Activated CD4-positive, alpha-beta memory T cell treated with anti-CD3 and anti-CD28 coated beads, Interleukin-2, amount 10 ng/mL, durations not matched to agents 7 days and 5 days (primary cell): ENCODE measurements at regions of chr4 and their contacts with region 1.

Region 1: GRCh38 chr4:129362674-129363274 is 266.8 kb downstream of the C4orf33 start:
- DNase-seq: peak; percentile 48
- H3K4me3 Mint-ChIP-seq: no peak overlapping the region
- H3K27ac Mint-ChIP-seq: no peak overlapping the region
- H3K4me1 Mint-ChIP-seq: no peaks in the 10 kb centered on the region
- H3K27me3 Mint-ChIP-seq: peaks cover 9% of the 10 kb centered on the region

Region 2: DNA sequence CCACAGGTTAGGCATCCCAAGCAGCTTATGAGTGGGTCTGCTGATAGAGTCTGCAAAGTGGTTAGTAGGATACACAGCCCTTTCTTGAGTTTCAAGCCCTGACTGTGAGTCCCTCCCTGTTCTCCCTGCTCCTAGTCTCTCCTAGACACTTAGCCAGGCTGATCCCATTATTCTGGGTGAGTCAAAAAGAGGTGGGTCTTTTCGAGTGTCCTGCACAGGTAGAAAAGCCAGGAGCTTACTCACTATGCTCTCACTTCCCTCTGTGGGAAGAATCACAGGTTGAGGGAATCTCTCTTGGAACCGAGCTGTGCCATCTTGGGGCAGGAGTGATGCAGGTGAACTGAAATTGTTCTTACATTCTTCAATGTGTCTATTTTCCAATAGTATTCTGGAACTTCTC is 299.1 kb before region 1 on chr4:
- CTCF ChIA-PET with region 1: no interaction called
- POLR2A ChIA-PET with region 1: no interaction called
- DNase-seq: no peak
- H3K4me3 Mint-ChIP-seq: no peak overlapping the region
- H3K27ac Mint-ChIP-seq: no peak overlapping the region
- H3K4me1 Mint-ChIP-seq: no peaks in the 10 kb centered on the region
- H3K27me3 Mint-ChIP-seq: no peaks in the 10 kb centered on the region

Region 3: GRCh38 chr4:129377131-129377845 is 14.5 kb after region 1 on chr4:
- CTCF ChIA-PET with region 1: interaction called, 12 read pairs
- POLR2A ChIA-PET with region 1: interaction called, 3 read pairs
- DNase-seq: no peak
- H3K4me3 Mint-ChIP-seq: no peak overlapping the region
- H3K27ac Mint-ChIP-seq: no peak overlapping the region
- H3K4me1 Mint-ChIP-seq: no peaks in the 10 kb centered on the region
- H3K27me3 Mint-ChIP-seq: no peaks in the 10 kb centered on the region

Region 4: DNA sequence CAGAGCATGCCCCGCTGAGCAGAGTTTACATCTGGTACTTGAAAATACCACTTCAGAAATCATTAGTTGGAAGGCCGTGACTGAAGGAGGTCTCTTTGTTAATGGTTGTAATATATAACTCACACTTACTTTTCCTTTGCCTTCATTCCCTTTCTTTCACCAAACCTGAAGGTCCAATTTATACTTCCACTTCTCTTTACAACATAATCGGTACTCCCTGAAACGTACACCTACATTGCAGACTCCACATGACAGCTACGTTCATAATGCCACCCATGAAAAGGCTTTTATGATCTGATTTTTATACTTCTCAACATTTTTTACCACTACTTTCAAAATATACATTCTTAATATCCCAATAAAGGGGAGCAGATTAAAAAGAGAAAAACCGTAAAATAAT is 31.9 kb after region 1 on chr4:
- CTCF ChIA-PET with region 1: no interaction called
- POLR2A ChIA-PET with region 1: no interaction called
- DNase-seq: no peak
- H3K4me3 Mint-ChIP-seq: no peak overlapping the region
- H3K27ac Mint-ChIP-seq: no peak overlapping the region
- H3K4me1 Mint-ChIP-seq: no peaks in the 10 kb centered on the region
- H3K27me3 Mint-ChIP-seq: no peaks in the 10 kb centered on the region

Region 5: GRCh38 chr4:129641179-129641578 is 278.4 kb after region 1 on chr4:
- CTCF ChIA-PET with region 1: interaction called, 31 read pairs
- POLR2A ChIA-PET with region 1: no interaction called
- DNase-seq: peak; percentile 45
- H3K4me3 Mint-ChIP-seq: no peak overlapping the region
- H3K27ac Mint-ChIP-seq: no peak overlapping the region
- H3K4me1 Mint-ChIP-seq: no peaks in the 10 kb centered on the region
- H3K27me3 Mint-ChIP-seq: no peaks in the 10 kb centered on the region